IMR-90 (cell line): ENCODE measurements at regions of chr4 and their contacts with region 1.

Region 1: DNA sequence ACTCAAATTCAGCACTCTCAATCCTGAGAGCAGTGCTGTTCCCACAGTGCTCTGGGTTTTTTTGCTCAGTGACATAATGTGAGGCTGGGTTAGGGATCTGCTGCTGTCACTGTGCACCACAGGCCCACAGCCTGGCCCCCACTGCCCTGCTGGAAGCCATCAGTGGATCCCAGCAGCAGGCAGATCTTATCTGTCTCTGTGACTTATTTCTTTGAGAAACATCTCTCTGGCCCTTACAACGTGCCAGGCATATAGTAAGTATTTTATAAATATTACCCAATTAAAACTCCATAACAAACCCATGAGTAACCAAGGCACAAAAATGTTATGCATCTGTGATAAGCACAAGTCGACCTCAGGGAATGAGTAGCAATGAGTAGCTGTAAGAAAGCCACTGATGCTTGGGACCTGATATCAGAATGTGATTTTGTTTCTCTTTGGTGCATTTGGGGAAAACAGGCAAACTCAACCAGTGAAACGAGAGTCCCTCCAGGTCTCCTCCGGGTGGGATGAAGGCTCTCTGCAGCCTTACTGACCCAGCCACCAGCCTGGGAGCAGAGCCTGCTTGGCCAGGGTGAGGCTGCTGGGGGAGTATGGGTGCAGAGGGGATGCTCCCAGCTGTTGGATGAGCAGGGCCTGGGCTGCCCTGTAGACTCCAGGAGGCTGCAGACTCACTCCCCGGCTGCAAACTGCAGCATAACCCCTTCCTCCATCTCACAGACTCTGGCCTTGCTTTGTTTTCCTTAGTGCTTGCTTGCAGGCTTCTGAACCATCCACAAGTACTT is 172.7 kb upstream of the LNX1 start:
- DNase-seq: peak; percentile 89
- ATAC-seq: peak; percentile 82
- H3K4me3 ChIP-seq: no peak overlapping the region
- H3K27ac ChIP-seq: peak overlapping the region; percentile 98
- H3K4me1 ChIP-seq: peaks cover 31% of the 10 kb centered on the region
- H3K27me3 ChIP-seq: no peaks in the 10 kb centered on the region
- CTCF ChIP-seq: no peak
- POLR2A ChIP-seq: no peak
- RAD21 ChIP-seq: no peak

Region 2: DNA sequence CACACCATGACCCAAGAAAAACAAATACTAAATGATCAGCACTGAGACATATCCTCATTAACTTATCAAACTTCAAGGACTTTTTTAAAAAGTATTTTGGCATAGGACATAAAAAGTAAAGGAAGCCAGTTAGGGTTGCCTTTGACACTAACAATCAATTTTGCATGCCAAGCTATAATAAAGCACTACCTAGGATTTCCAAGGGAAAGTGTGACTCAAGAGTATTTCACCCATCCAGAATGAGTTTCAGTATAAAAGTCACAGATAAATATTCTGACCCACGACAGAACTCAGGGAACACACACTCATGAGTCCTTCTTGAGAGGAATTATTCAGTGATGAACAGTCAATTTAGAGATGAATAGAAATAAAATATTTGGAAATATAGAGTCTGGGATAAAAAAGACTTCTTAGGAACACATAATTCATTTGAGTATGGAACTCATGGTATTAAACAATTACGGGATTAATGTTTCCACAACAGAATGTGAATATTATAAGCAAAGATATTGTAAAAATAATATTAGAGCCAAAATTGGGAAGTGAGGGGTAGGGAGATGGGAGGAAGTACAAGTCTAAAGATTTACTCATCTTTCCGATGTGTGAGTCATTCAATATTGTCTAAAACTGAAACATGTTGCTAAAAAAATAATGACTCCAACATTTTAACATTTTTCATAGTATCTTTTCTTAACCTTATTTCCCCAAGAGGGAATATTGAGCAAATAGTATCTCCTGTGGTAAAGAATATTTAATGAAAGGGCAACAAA is 29.2 kb before region 1 on chr4:
- CTCF ChIA-PET with region 1: no interaction called
- POLR2A ChIA-PET with region 1: interaction called, 3 read pairs
- dilution Hi-C with region 1: no loop called
- in situ Hi-C with region 1: no loop called
- intact Hi-C with region 1: loop called (anchors 5 kb)
- DNase-seq: peak; percentile 75
- ATAC-seq: peak; percentile 77
- H3K4me3 ChIP-seq: no peak overlapping the region
- H3K27ac ChIP-seq: no peak overlapping the region
- H3K4me1 ChIP-seq: peaks cover 7% of the 10 kb centered on the region
- H3K27me3 ChIP-seq: no peaks in the 10 kb centered on the region
- CTCF ChIP-seq: no peak
- POLR2A ChIP-seq: no peak
- RAD21 ChIP-seq: no peak

Region 3: DNA sequence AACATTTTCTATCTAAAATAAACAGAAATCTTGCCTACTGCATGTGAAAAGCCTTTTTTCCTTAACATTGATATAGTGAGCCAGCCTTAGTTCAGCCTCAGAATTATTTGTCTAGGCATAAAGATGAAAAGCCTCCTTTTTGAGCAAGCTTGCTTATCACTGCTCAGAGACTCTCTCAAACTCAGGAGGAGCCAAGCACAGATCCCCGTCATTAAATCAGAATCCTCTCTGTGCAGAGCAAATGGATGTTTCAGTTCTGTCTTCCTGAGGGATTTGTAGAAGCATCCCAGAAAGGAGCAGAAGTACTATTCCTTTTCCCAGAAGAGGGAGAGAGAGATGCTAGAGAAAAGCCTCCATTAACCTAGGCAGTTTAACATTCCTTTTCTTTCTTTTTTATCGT is 14.2 kb after region 1 on chr4:
- CTCF ChIA-PET with region 1: interaction called, 3 read pairs
- POLR2A ChIA-PET with region 1: interaction called, 4 read pairs
- dilution Hi-C with region 1: no loop called
- in situ Hi-C with region 1: no loop called
- intact Hi-C with region 1: loop called (anchors 2 kb)
- DNase-seq: no peak
- ATAC-seq: no peak
- H3K4me3 ChIP-seq: no peak overlapping the region
- H3K27ac ChIP-seq: peak overlapping the region; percentile 96
- H3K4me1 ChIP-seq: peaks cover 29% of the 10 kb centered on the region
- H3K27me3 ChIP-seq: no peaks in the 10 kb centered on the region
- CTCF ChIP-seq: no peak
- POLR2A ChIP-seq: no peak
- RAD21 ChIP-seq: no peak